ENCODE measurements at regions of chr15 and their contacts with region 1.

Region 1: GRCh38 chr15:92077353-92078085 is 224.0 kb downstream of the SLCO3A1 start:
- DNase-seq: peak; percentile 67 to 83
- ATAC-seq: peak; percentile 71 to 84 (median 76)
- H3K4me3 ChIP-seq: no peak overlapping the region
- H3K27ac ChIP-seq: no peak overlapping the region
- H3K4me1 ChIP-seq: peaks cover 9 to 70% (median 61%) of the 10 kb centered on the region in 9 donors
- H3K27me3 ChIP-seq: no peaks in the 10 kb centered on the region
- CTCF ChIP-seq: peak; percentile 59 to 91 (median 78)

Region 2: DNA sequence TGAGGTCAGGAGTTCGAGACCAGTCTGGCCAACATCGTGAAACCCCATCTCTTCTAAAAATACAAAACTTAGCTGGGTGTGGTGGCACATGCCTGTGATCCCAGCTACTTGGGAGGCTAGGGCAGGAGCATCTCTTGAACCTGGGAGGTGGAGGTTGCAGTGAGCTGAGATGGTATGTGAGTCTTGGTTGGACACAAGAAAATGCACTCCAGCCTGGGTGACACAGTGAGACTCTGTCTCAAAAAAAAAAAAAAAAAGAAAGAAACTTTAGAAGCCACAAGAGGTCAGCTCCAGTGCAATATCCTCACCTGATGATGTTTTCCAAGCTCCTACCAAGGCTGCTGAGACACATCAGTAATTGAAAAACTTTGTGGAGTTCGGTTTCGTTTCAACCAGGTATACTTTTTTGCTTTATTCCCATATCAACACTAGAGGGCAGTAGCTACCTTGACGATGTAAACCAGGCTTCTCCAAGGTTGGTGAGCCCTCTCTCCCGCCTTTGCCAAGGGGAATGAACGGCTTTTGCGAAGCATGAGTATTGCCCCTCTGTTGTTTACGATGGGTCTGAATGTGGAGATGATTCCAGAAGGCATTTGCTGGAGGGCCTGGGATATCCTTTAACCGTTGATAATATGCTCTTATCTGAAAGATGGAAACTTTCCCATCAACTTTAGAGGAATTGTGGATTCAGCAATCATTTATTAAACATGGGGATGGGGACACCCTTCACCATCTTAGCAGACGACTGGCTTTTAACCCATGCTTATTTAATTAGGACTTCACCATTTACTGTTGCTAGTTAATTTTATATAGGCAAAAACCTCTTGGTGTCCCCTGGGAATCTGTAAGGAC is 774.7 kb before region 1 on chr15:
- intact Hi-C with region 1: loop called (anchors 2 to 5 kb)
- DNase-seq: peak in 1 of 2 donors; percentile 48
- ATAC-seq: peak; percentile 76 to 91 (median 80)
- H3K4me3 ChIP-seq: no peak overlapping the region
- H3K27ac ChIP-seq: no peak overlapping the region
- H3K4me1 ChIP-seq: peaks cover 0 to 24% (median 9%) of the 10 kb centered on the region in 9 donors
- H3K27me3 ChIP-seq: peaks cover 0 to 18% (median 7%) of the 10 kb centered on the region in 7 donors
- CTCF ChIP-seq: peak; percentile 44 to 83 (median 74)

Region 3: GRCh38 chr15:91706322-91707032 is 371.0 kb before region 1 on chr15:
- intact Hi-C with region 1: loop called in 9 of 10 experiments (anchors 2 to 10 kb)
- DNase-seq: peak; percentile 62 to 82
- ATAC-seq: peak; percentile 78 to 90 (median 84)
- H3K4me3 ChIP-seq: peak overlapping the region in 1 of 10 donors; percentile 3
- H3K27ac ChIP-seq: peak overlapping the region in 5 of 10 donors; percentile 8 to 79 (median 32)
- H3K4me1 ChIP-seq: peaks cover 0 to 23% (median 6%) of the 10 kb centered on the region in 9 donors
- H3K27me3 ChIP-seq: no peaks in the 10 kb centered on the region
- CTCF ChIP-seq: peak; percentile 77 to 95 (median 93)

Region 4: GRCh38 chr15:91872356-91873137 is 205.0 kb before region 1 on chr15:
- intact Hi-C with region 1: no loop called
- DNase-seq: no peak
- ATAC-seq: no peak
- H3K4me3 ChIP-seq: no peak overlapping the region
- H3K27ac ChIP-seq: peak overlapping the region in 1 of 10 donors; percentile 45
- H3K4me1 ChIP-seq: peaks cover 4 to 60% (median 47%) of the 10 kb centered on the region in 9 donors
- H3K27me3 ChIP-seq: no peaks in the 10 kb centered on the region
- CTCF ChIP-seq: no peak

Region 5: DNA sequence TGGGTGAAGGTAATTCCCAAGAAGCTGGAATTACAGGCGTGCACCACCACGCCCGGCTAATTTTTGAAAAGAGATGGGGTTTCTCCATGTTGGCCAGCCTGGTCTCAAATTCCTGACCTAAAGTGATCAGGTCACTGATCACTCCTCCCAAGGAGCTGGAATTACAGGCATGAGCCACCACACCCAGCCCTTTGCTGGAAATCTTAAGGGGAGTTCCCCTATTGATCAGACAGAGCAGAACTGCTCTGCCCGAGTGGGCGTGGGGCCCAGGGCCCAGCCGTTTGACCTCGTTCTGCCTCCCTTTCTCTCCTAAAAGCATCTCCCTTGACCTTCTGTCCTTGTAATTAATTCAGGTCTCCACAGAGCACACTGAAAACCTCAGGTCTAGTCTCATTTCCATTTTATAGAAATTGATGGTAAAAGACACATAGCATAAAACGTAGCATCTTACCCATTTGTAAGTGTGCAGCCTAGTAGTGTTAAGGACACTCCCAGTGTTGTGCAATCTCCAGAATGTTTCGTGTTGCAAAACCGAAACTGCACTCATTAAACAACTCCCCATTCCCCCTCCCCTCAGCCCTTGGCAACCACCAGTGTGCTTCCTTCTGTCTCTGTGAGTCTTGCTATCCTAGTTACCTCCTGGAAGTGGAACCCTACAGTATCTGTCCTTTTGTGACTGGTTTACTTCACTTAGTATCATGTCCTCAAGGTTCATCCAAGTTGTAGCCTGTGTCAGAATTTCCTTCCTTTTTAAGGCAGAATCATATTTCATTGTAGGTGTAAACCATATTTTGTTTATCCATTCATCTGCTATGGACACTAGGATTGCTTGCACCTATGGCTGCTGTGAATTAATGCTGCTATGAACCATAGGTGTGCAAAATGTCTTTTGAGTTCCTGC is 134.6 kb before region 1 on chr15:
- intact Hi-C with region 1: loop called in 8 of 10 experiments (anchors 2 to 10 kb)
- DNase-seq: peak; percentile 63 to 88
- ATAC-seq: peak; percentile 75 to 92 (median 86)
- H3K4me3 ChIP-seq: peak overlapping the region in 7 of 10 donors; percentile 6 to 35 (median 17)
- H3K27ac ChIP-seq: peak overlapping the region in 9 of 10 donors; percentile 29 to 82 (median 68)
- H3K4me1 ChIP-seq: peaks cover 37 to 98% (median 93%) of the 10 kb centered on the region in 9 donors
- H3K27me3 ChIP-seq: no peaks in the 10 kb centered on the region
- CTCF ChIP-seq: no peak

Region 6: GRCh38 chr15:91965501-91966184 is 111.9 kb before region 1 on chr15:
- intact Hi-C with region 1: loop called in 4 of 10 experiments (anchors 5 to 10 kb)
- DNase-seq: no peak
- ATAC-seq: peak in 6 of 8 donors; percentile 17 to 41 (median 28)
- H3K4me3 ChIP-seq: no peak overlapping the region
- H3K27ac ChIP-seq: peak overlapping the region in 9 of 10 donors; percentile 7 to 57 (median 48)
- H3K4me1 ChIP-seq: peaks cover 25 to 93% (median 68%) of the 10 kb centered on the region in 9 donors
- H3K27me3 ChIP-seq: no peaks in the 10 kb centered on the region
- CTCF ChIP-seq: no peak

Measured in heart right ventricle (tissue), 16 donors.